Panc1 (cell line): ENCODE measurements at regions of chr10 and their contacts with region 1.

Region 1: DNA sequence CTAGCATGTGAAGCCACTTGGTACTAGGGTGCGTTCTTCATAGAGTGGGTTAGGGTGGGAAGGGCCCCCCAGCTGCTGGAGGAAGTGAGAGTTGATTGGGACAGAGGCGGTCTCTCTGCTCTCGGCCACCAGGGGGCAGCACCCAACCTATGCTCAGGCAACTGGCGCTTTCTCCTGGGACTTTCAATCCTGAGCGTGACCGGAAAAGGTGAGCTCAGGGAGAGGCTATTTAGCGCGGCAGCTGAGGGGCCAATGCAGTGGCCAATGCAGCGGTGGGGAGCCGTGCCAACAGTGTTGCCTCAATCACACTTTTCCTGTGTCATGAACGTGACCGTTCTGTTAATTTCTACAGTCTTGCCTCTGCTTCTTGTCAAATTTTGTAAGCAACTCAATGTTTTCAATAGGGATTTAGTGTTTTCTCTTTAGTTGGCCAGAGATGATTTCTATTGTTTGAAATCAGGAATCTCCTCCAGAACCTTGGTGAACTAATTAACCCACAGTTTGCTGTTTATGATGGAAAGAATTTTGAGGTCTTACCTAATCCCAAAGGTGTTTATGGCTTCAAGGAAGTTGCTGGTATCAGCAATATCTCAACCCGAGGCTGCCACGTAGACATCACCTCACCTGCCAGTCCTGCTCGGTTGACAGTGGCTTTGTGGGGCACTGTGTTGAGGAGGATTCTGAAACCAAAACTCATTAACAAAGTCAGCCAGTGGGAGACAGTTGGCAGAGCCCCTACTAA is 67.9 kb upstream of the PDZD8 start:
- DNase-seq: no peak
- ATAC-seq: peak; percentile 82
- H3K4me3 ChIP-seq: no peak overlapping the region
- H3K27ac ChIP-seq: no peak overlapping the region
- H3K4me1 ChIP-seq: no peaks in the 10 kb centered on the region
- H3K27me3 ChIP-seq: no peaks in the 10 kb centered on the region
- CTCF ChIP-seq: peak; percentile 94

Region 2: DNA sequence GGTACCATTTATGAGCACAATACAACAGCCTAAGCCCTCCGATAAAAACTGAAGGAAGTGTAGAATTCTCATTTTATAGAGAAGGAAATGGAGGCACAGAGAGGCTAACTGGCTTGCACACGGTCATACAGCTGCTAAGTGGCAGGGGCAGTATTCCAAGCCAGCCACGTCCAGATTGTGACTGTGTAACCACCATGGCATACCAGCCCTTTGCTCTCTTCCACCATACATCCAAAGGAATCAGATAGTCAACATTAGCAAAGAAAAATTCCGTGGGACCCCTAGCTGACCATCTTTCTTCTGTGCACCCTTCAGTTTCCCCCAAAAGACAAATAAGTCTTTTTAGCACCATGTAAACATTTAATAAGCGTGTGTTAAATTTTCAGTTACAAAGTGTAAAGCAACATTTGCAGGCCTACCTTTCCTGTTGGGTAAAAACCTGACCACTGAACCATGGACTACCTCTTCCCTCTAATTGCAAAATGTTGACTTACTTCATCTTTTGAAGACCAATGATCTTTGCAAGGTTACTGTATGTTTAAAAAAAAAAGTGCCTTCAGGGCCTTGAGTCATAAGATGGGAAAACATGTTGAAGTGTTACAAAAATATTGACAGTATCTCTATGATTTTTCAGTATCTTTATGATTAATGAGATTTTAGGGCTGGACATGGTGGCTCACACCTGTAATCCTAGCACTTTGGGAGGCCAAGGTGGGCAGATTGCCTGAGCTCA is 43.6 kb before region 1 on chr10:
- CTCF ChIA-PET with region 1: no interaction called
- POLR2A ChIA-PET with region 1: no interaction called
- in situ Hi-C with region 1: no loop called
- intact Hi-C with region 1: no loop called
- DNase-seq: no peak
- ATAC-seq: no peak
- H3K4me3 ChIP-seq: no peak overlapping the region
- H3K27ac ChIP-seq: no peak overlapping the region
- H3K4me1 ChIP-seq: no peaks in the 10 kb centered on the region
- H3K27me3 ChIP-seq: peaks cover 3% of the 10 kb centered on the region; the same call in 1 of the 2 replicates
- CTCF ChIP-seq: no peak

Region 3: GRCh38 chr10:117477961-117478670 is 35.0 kb after region 1 on chr10:
- CTCF ChIA-PET with region 1: interaction called, 10 read pairs
- POLR2A ChIA-PET with region 1: no interaction called
- in situ Hi-C with region 1: no loop called
- intact Hi-C with region 1: loop called (anchors 2 kb)
- DNase-seq: peak; percentile 30
- ATAC-seq: peak; percentile 87
- H3K4me3 ChIP-seq: no peak overlapping the region
- H3K27ac ChIP-seq: no peak overlapping the region
- H3K4me1 ChIP-seq: no peaks in the 10 kb centered on the region
- H3K27me3 ChIP-seq: 0 out of 2 replicates have a peak, but pooled peaks cover 2% of the 10 kb centered on the region
- CTCF ChIP-seq: peak; percentile 72